IMR-90 (cell line): ENCODE measurements at regions of chr9 and their contacts with region 1.

Region 1: DNA sequence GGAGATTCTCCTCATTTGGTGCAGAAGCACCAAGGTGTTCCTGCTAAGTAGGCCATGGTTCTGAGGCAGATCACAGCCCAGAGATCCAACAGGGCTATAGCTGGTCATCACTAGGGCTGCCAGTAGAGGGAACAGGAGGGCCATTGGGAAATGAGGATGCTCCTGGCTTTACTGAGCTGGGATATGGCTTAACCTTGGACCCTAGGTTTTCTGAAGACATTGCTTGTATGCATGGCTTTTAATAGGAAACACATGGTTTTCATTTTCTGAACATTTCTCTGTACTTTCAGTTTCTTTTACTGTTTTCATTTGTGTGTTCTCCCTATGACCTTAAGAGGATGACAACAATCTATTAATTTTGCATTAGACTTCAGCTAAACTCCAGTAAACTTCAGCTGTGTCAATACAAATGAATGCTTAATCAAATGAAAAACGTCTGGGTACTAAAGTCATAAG is at the start of gene IFNW1:
- DNase-seq: no peak
- ATAC-seq: 0 out of 2 replicates have a peak, but pooled peaks have one; percentile 32
- H3K4me3 ChIP-seq: no peak within 1 kb of the TSS
- H3K27ac ChIP-seq: no peak within 1 kb of the TSS
- H3K4me1 ChIP-seq: no peaks in the 10 kb centered on the region
- H3K27me3 ChIP-seq: peaks cover 2% of the 10 kb centered on the region; the same call in 1 of the 2 replicates
- CTCF ChIP-seq: no peak
- POLR2A ChIP-seq: no peak
- RAD21 ChIP-seq: no peak
- total RNA-seq, gene IFNW1: not detected in 2 replicates

Region 2: DNA sequence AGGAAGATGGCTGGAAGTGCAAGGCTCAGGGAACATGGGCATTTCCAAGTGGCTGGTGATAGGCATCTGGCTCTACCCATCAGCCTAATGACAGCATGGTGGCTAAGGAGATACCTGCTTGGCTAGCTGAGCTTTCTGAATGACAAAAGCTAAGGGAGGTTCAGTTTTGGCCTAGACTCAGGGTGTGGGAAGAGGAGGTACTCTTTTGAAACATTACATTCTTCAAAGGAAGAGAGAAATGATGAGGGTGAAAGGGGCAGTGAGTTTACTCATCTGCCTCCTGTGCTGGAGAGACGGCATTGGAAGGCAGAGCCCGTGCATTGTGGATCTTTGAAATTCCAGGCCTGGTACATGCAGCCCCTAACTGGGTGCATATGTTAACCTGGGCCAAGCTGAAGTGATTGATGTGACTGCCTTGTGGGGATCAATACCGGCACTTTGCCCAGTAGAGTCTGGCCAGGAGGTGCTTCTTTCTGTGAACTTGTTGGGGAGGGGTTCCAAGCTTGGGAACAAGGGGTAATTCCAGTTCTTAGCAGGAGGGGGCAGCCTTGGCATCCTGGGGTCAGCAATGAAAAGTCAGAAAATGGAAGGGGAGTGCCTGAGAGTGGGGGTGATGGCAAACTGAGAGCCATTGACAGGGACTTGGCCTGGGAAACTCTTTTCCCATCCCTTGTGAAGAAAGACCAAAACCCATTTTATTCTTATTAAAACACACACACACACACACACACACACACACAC is 1624.1 kb before region 1 on chr9:
- CTCF ChIA-PET with region 1: no interaction called
- POLR2A ChIA-PET with region 1: no interaction called
- dilution Hi-C with region 1: no loop called
- in situ Hi-C with region 1: loop called (anchors 25 kb)
- intact Hi-C with region 1: no loop called
- DNase-seq: no peak
- ATAC-seq: no peak
- H3K4me3 ChIP-seq: no peak overlapping the region
- H3K27ac ChIP-seq: no peak overlapping the region
- H3K4me1 ChIP-seq: no peaks in the 10 kb centered on the region
- H3K27me3 ChIP-seq: 0 out of 2 replicates have a peak, but pooled peaks cover 2% of the 10 kb centered on the region
- CTCF ChIP-seq: 0 out of 2 replicates have a peak, but pooled peaks have one; percentile 13
- POLR2A ChIP-seq: no peak
- RAD21 ChIP-seq: no peak

Region 3: DNA sequence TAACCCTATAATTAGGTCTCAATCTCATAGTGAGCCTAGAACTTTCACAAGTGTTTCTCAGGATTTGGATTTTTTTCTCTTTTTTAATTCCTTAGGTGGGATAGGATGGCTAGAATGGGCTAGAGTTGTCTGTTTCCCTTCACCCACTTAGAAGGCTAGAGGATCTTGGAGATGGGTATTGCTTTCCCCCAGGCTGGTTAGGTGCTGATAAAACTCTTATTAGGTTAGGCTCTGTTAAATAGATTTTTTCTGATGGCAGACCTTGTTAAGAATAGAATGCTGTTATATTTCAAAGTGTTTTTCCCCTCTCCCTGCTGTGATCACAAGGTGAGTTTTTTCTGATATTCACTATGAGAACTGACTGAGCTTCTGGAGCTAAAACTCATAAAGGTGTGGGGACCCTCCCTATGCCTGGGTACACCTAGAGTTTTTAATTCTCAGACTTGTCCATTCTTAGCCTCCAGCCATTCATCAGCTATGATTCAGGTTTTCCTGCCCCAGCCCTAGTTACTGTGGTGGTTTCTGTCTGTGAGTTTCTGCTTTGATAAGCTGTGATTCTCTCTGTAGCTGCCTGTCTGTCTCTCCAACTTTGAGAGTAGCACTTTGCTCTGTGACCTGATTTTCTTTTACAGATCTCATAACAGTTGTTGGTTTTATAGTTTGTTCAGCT is 242.4 kb before region 1 on chr9:
- CTCF ChIA-PET with region 1: no interaction called
- POLR2A ChIA-PET with region 1: no interaction called
- dilution Hi-C with region 1: no loop called
- in situ Hi-C with region 1: no loop called
- intact Hi-C with region 1: no loop called
- DNase-seq: peak; percentile 16
- ATAC-seq: no peak
- H3K4me3 ChIP-seq: no peak overlapping the region
- H3K27ac ChIP-seq: no peak overlapping the region
- H3K4me1 ChIP-seq: 0 out of 2 replicates have a peak, but pooled peaks cover 2% of the 10 kb centered on the region
- H3K27me3 ChIP-seq: no peaks in the 10 kb centered on the region
- CTCF ChIP-seq: no peak
- POLR2A ChIP-seq: no peak
- RAD21 ChIP-seq: no peak

Region 4: GRCh38 chr9:21244836-21245235 is 103.4 kb after region 1 on chr9:
- CTCF ChIA-PET with region 1: no interaction called
- POLR2A ChIA-PET with region 1: no interaction called
- dilution Hi-C with region 1: no loop called
- in situ Hi-C with region 1: no loop called
- intact Hi-C with region 1: no loop called
- DNase-seq: no peak
- ATAC-seq: no peak
- H3K4me3 ChIP-seq: no peak overlapping the region
- H3K27ac ChIP-seq: no peak overlapping the region
- H3K4me1 ChIP-seq: no peaks in the 10 kb centered on the region
- H3K27me3 ChIP-seq: no peaks in the 10 kb centered on the region; the same call in 1 of the 2 replicates
- CTCF ChIP-seq: no peak
- POLR2A ChIP-seq: no peak
- RAD21 ChIP-seq: no peak